ENCODE measurements at regions of chr7 and their contacts with region 1.

Region 1: DNA sequence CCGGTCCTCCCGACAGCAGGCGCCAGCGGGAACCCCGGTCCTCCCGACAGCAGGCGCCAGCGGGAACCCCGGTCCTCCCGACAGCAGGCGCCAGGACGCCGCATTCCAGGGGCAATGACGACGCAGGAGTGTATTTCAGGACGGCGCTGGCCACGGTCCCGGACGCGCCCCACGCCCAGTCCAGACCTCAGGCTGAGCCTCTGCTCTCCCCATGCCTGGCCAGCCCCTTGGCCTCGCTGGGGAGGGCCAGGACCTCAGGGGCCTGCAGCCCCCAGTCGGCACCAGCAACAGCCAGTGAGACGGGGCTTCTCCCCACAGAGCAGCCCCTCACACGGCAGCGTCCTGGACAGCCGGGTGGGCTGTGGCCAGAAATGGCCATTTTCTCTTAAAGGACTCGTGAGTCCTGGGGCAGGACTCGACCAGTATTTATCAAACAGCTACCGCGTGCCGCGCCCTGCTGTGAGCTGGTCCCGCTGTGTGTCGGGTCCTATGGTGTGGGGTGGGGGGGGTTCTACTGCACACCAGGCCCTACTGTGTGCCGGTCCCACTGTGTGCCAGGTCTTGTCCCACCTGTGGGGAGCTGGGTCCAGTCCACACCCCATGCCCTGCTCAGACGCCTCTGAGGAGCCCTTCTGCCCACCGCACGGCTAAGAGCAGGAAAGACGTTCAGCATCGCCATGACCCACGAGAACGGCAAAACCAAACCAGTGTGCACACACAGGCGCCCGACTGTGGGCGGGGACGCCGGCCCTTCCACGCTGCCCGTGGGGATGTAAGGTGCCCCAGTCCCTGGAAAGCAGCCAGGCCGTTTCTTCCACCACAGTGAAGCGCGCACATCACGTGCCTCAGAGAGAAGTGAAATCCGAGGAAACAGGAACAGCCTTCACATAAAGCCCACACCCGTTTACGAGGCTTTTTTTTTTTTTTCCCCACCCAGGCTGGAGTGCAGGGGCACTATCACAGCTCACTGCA is 33.3 kb downstream of the GET4 start:
- DNase-seq: peak; percentile 72 to 79
- ATAC-seq: peak in 3 of 4 donors; percentile 50 to 65 (median 59)
- H3K4me3 ChIP-seq: peak overlapping the region; percentile 51
- H3K27ac ChIP-seq: no peak overlapping the region
- H3K4me1 ChIP-seq: no peaks in the 10 kb centered on the region
- H3K27me3 ChIP-seq: peaks cover 0 to 33% (median 2%) of the 10 kb centered on the region in 3 donors
- CTCF ChIP-seq: no peak

Region 2: DNA sequence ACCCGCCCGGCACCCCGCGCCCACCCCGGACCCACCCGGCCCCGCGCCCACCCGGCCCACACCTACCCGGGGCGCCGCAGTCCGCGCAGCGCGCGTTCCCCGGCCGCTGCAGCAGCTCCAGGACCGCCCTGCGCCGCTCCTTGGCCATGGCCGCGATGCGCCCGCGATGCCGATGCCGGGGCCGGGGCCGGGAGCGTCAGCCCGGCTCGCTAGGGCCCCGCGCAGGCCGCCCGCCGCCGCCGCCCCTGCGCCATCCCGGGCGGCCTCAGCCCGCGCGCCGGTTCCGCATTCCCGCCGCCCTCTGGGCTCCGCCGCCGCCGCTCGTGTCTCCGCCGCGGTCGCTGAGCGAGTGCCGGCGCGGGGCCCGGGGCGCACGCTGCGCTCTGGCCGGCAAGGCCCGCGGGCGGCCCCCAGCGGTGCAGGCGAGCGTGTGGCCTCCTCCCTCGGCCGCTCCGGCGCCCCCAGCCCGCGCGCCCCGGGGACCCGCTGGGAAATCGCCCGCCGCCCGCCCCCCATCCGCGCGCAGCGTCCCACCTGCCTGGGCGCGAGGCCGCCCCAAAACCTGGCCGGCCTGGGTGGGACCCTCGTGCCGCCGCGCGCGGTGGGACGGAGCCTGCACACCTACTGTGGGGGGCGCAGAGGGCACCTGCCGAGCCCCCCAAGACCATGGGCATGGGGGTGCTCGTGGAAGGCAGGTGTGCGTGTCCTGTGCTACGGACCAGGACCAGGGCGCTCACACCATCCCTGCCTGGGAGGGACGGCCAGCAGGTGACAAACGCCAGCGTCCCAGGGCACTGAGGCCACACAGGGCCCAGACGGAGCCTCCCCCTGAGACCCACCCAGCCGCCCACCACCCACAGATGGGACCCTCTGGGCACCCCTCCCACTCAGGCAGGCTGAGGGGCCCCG is 44.9 kb after region 1 on chr7 and contains the start of gene ADAP1:
- intact Hi-C with region 1: loop called in 1 of 2 experiments (anchors 5 kb)
- DNase-seq: peak; percentile 51 to 62
- ATAC-seq: peak; percentile 48 to 73 (median 62)
- H3K4me3 ChIP-seq: peak within 1 kb of the TSS; percentile 62
- H3K27ac ChIP-seq: no peak within 1 kb of the TSS
- H3K4me1 ChIP-seq: no peaks in the 10 kb centered on the region
- H3K27me3 ChIP-seq: peaks cover 0 to 54% (median 14%) of the 10 kb centered on the region in 3 donors
- CTCF ChIP-seq: no peak
- total RNA-seq, gene ADAP1: 0.88 to 1.4 (median 1.2) TPM

Region 3: GRCh38 chr7:1065263-1066260 is 155.9 kb after region 1 on chr7:
- intact Hi-C with region 1: loop called in 1 of 2 experiments (anchors 5 kb)
- DNase-seq: peak; percentile 86 to 92
- ATAC-seq: peak; percentile 96 to 100 (median 98)
- H3K4me3 ChIP-seq: peak overlapping the region; percentile 39
- H3K27ac ChIP-seq: no peak overlapping the region
- H3K4me1 ChIP-seq: peaks cover 7% of the 10 kb centered on the region
- H3K27me3 ChIP-seq: no peaks in the 10 kb centered on the region
- CTCF ChIP-seq: peak; percentile 83